Common myeloid progenitor, CD34-positive (primary cell): ENCODE measurements at regions of chr1 and their contacts with region 1.

Region 1: GRCh38 chr1:109649491-109649914 is 6.4 kb upstream of the GSTM4 start:
- DNase-seq: peak; percentile 48 to 80 (median 70)
- H3K4me3 ChIP-seq: peak overlapping the region in 3 of 7 experiments; percentile 34 to 68 (median 38)
- H3K27ac ChIP-seq: no peak overlapping the region
- H3K4me1 ChIP-seq: peaks cover 0 to 6% (median 0%) of the 10 kb centered on the region in 4 experiments
- H3K27me3 ChIP-seq: peaks cover 0 to 2% (median 0%) of the 10 kb centered on the region in 5 experiments

Region 2: GRCh38 chr1:109438798-109439297 is 210.7 kb before region 1 on chr1:
- CTCF ChIA-PET with region 1: no interaction called
- POLR2A ChIA-PET with region 1: no interaction called
- DNase-seq: peak in 1 of 3 donors; percentile 8
- H3K4me3 ChIP-seq: no peak overlapping the region
- H3K27ac ChIP-seq: no peak overlapping the region
- H3K4me1 ChIP-seq: no peaks in the 10 kb centered on the region
- H3K27me3 ChIP-seq: peaks cover 0 to 15% (median 4%) of the 10 kb centered on the region in 5 experiments

Region 3: DNA sequence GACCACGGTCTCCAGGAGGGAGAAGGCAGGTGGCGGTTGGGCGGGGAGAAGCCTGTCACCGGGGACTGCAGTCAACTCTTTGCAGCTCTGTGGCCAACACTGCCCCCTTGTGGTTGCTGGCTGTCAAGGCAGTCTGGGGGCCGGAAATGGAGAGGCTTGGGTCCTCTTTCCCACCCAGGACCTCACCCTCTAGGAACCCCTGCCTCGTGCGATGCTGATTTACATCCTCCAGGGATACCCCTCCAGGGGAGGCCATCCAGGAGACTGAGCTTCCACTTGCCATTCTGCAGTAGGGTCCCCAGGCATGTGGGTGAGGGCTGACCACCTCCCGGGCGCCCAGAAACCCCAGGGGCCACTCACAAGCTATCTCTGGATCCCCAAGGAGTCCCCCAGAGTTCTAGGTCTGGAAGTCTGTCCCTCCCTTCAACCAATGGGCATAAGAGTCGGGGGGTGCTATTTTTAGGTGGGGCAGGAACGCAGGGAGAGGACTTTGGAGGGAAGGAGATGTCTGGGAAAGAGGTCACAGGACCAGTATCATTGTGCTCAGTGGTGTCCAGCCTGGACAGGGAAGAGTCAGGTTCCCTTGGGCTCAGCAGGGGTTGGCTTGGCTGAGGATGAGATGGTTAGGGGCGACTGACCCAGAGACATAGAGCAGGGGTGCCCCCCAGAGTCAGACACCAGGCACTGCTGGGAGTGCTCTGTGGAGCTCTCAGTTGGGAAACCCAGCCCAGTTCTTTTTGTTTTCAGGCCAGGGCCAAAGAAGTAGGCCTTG is 117.0 kb before region 1 on chr1:
- CTCF ChIA-PET with region 1: interaction called, 12 read pairs
- POLR2A ChIA-PET with region 1: interaction called, 4 read pairs
- DNase-seq: peak; percentile 73 to 85 (median 78)
- H3K4me3 ChIP-seq: peak overlapping the region in 5 of 7 experiments; percentile 9 to 71 (median 51)
- H3K27ac ChIP-seq: no peak overlapping the region
- H3K4me1 ChIP-seq: peaks cover 0 to 15% (median 5%) of the 10 kb centered on the region in 4 experiments
- H3K27me3 ChIP-seq: peaks cover 0 to 3% (median 0%) of the 10 kb centered on the region in 5 experiments

Region 4: DNA sequence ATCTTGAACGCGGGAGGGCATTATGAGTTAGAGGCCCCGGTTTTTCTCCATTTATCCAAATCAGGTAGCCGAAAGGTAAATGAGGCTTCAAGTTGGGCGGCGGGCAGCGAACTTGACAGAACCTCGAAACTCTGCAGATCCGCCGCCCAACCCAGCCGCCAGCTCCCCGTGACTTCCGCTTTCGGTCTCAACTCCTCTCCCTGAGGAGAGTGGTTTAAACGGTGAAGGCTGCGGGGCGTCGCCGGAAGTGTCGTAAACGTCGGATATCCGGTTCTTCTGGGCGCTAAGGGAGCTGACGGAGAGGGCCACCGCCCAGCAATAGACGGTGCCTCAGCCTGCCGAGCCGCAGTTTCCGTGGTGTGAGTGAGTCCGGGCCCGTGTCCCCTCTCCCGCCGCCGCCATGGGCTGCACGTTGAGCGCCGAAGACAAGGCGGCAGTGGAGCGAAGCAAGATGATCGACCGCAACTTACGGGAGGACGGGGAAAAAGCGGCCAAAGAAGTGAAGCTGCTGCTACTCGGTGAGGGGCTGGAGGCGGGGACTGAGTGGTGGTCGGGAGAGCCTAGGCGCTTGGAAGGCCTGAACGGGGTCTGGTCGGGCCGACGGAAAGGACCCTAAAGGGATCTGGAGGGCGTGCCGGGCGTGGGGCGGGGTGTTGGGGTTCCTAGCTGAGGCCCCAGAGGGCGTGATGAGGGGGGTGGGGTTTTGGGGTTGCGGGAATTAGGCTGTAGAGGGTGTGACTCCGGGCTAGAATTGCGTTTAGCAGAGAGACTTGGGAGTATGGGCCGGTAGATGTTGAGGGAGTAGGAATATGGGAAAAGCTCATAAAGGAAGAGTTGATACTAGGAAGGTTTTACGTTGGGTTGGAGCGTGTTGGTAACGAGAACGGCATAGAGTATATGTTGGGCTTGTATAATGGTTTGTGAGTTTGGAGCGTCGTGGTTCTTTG is 100.9 kb before region 1 on chr1 and contains the start of gene GNAI3:
- CTCF ChIA-PET with region 1: interaction called, 15 read pairs
- POLR2A ChIA-PET with region 1: no interaction called
- DNase-seq: peak; percentile 98 to 99 (median 99)
- H3K4me3 ChIP-seq: peak within 1 kb of the TSS; percentile 96 to 99 (median 98)
- H3K27ac ChIP-seq: peak within 1 kb of the TSS; percentile 95 to 98
- H3K4me1 ChIP-seq: peaks cover 21 to 35% (median 32%) of the 10 kb centered on the region in 4 experiments
- H3K27me3 ChIP-seq: no peaks in the 10 kb centered on the region

Region 5: DNA sequence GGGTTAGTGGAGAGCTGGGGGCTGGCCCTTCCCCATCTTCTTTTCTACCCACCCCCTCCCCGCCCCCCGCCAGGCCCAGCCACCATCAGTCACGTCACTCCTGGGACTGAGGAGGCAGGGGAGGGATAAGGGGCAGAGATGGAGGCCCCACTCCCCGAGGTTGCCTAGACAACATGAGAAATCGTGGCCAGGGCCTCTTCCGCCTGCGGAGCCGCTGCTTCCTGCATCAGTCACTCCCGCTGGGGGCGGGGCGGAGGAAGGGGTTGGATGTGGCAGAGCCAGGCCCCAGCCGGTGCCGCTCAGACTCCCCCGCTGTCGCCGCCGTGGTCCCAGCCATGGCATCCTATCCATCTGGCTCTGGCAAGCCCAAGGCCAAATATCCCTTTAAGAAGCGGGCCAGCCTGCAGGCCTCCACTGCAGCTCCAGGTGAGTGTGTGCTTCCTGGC is 28.6 kb before region 1 on chr1:
- CTCF ChIA-PET with region 1: interaction called, 11 read pairs
- POLR2A ChIA-PET with region 1: no interaction called
- DNase-seq: peak; percentile 97 to 99 (median 99)
- H3K4me3 ChIP-seq: peak overlapping the region; percentile 76 to 97 (median 93)
- H3K27ac ChIP-seq: peak overlapping the region; percentile 97 to 99
- H3K4me1 ChIP-seq: peaks cover 48 to 85% (median 75%) of the 10 kb centered on the region in 4 experiments
- H3K27me3 ChIP-seq: no peaks in the 10 kb centered on the region

Region 6: DNA sequence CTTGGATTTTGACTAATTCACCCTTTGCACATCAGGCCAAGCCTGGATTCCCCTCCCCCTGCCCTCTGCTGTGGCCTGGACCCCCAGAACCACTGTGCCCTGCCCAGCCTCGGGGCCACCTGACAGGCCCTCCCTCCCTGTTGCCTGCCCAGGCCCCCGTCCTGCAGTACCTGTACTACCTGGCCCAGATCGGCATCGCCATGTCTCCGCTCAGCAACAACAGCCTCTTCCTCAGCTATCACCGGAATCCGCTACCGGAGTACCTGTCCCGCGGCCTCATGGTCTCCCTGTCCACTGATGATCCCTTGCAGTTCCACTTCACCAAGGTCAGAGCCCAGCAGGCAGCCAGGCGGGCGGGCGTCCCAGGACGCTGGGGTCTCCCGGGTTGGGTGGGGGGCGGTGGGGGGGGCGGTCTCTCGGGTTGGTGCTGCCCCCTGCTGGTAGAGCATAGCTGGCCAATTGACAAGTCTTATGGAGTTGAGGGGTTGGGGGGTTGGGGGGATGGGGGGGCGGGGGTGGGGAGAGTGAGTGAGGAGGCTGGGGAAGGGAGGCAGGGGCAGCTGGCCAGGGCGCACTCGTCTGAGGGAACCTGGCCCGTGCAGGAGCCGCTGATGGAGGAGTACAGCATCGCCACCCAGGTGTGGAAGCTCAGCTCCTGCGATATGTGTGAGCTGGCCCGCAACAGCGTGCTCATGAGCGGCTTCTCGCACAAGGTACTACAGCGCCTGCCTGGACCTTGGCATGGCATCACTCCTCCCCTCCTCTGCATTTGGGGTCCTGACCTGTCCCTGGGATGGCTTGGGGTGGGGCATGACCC is 19.2 kb before region 1 on chr1:
- CTCF ChIA-PET with region 1: interaction called, 233 read pairs
- POLR2A ChIA-PET with region 1: no interaction called
- DNase-seq: peak in 2 of 3 donors; percentile 51 to 53
- H3K4me3 ChIP-seq: no peak overlapping the region
- H3K27ac ChIP-seq: no peak overlapping the region
- H3K4me1 ChIP-seq: peaks cover 0 to 9% (median 6%) of the 10 kb centered on the region in 4 experiments
- H3K27me3 ChIP-seq: no peaks in the 10 kb centered on the region

Region 7: GRCh38 chr1:109984456-109985275 is 335.2 kb after region 1 on chr1 and contains the start of gene AHCYL1:
- CTCF ChIA-PET with region 1: interaction called, 11 read pairs
- POLR2A ChIA-PET with region 1: no interaction called
- DNase-seq: peak; percentile 98 to 99 (median 98)
- H3K4me3 ChIP-seq: peak within 1 kb of the TSS; percentile 76 to 90 (median 81)
- H3K27ac ChIP-seq: peak within 1 kb of the TSS; percentile 84 to 91
- H3K4me1 ChIP-seq: peaks cover 9 to 33% (median 17%) of the 10 kb centered on the region in 4 experiments
- H3K27me3 ChIP-seq: no peaks in the 10 kb centered on the region